ENCODE measurements at regions of chr4 and their contacts with region 1.

Region 1: DNA sequence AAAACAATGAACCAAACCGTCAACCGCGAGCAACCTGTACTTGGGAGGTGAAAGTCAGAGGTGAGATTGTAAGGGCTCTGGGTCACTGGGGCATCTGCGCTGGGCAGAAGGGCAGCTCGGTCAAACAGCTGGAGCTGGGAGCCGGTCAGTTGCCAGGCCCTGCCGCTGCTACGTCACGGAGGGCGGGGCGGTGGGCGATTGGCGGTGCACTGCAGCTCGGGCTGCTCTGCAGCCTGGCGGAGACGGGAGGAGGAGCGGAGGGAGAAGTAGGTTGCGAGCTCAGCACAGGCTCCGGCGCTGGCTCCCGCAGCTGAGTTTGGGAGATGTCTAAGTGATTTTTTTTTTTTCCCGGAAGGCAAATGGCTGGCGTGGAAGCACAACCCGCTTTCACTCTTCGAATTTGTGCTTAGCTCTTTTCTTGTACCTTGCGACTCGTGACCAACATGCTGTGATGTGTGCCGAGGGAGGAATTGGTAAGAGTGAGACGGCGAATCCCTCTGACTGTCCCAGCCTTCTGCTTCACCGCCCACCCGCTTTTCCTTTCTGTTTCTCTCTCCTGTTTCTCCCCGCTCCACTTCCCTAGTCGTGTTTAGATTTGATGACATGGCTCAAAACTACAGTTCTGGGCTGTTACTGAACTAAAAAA is at the start of gene ATP10D:
- DNase-seq: peak; percentile 75
- ATAC-seq: peak; percentile 100
- H3K4me3 ChIP-seq: peak within 1 kb of the TSS; percentile 55 to 74 (median 66)
- H3K27ac ChIP-seq: peak within 1 kb of the TSS; percentile 29
- H3K4me1 ChIP-seq: peaks cover 20% of the 10 kb centered on the region
- H3K27me3 ChIP-seq: peaks cover 0 to 3% of the 10 kb centered on the region in 2 experiments; a peak in 1 of 5 replicates
- CTCF ChIP-seq: peak; percentile 37
- EP300 ChIP-seq: no peak
- POLR2A ChIP-seq: peak; percentile 55 to 89
- RAD21 ChIP-seq: no peak
- total RNA-seq, gene ATP10D: 5.2 and 9.8 TPM in 2 replicates

Region 2: GRCh38 chr4:47442980-47443379 is 42.2 kb before region 1 on chr4:
- CTCF ChIA-PET with region 1: no interaction called
- POLR2A ChIA-PET with region 1: no interaction called
- in situ Hi-C with region 1: no loop called
- intact Hi-C with region 1: loop called (anchors 1 kb)
- DNase-seq: no peak
- ATAC-seq: no peak
- H3K4me3 ChIP-seq: no peak overlapping the region
- H3K27ac ChIP-seq: no peak overlapping the region
- H3K4me1 ChIP-seq: no peaks in the 10 kb centered on the region
- H3K27me3 ChIP-seq: no peaks in the 10 kb centered on the region
- CTCF ChIP-seq: no peak
- EP300 ChIP-seq: no peak
- POLR2A ChIP-seq: no peak
- RAD21 ChIP-seq: no peak

Region 3: GRCh38 chr4:47463235-47463956 is 21.8 kb before region 1 on chr4 and contains the start of gene COMMD8:
- CTCF ChIA-PET with region 1: no interaction called
- POLR2A ChIA-PET with region 1: interaction called, 15 read pairs
- in situ Hi-C with region 1: no loop called
- intact Hi-C with region 1: loop called (anchors 2 kb)
- DNase-seq: peak; percentile 92
- ATAC-seq: peak; percentile 99
- H3K4me3 ChIP-seq: peak within 1 kb of the TSS; percentile 64 to 83 (median 78)
- H3K27ac ChIP-seq: peak within 1 kb of the TSS; percentile 36
- H3K4me1 ChIP-seq: peaks cover 24% of the 10 kb centered on the region
- H3K27me3 ChIP-seq: no peaks in the 10 kb centered on the region; a peak in 1 of 5 replicates
- CTCF ChIP-seq: peak; percentile 52
- EP300 ChIP-seq: no peak
- POLR2A ChIP-seq: peak; percentile 65 to 88
- RAD21 ChIP-seq: no peak; the same call in 1 of the 2 replicates
- total RNA-seq, gene COMMD8: 20.3 and 32.7 TPM in 2 replicates

Region 4: DNA sequence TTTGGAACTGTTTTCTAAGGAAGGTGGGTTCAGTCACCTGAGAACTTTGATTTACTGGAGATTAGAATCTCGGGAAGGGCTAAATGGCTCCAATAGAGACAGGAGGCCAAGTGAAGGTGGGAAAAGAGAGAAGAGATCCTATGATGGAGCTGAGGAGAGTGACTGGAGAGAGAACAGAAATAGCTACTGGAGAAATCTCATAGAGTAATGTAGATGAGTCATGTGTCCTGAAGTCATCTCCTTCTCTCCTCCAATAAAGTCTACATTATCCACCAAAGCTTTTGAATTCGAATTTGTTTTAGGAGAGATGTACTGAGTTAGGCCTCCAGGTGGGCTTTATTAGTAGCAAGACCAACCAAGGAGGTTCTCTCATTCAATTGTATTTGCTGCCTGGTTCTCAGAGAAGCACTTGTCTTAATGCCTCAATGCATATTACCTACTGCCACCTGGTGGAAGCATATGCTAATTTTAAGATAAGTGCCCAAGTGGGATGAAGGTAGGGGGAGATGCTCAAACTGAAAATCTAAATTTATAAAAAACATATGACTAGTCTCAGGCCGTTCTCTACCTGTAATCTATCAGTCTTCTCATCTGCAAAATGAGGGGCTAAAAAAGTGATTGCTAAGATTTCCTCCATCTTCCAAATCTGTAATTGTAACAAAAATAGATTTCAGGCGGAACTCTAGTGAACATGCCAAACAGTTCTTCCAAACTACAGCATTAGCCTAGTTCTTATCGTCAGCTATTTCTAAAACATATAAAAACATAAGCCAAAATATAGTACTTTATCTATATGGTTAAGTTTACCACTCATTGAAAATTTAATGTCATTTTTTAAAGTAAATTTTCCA is 624.5 kb after region 1 on chr4:
- CTCF ChIA-PET with region 1: no interaction called
- POLR2A ChIA-PET with region 1: no interaction called
- in situ Hi-C with region 1: no loop called
- intact Hi-C with region 1: no loop called
- DNase-seq: peak; percentile 62
- ATAC-seq: peak; percentile 85
- H3K4me3 ChIP-seq: no peak overlapping the region
- H3K27ac ChIP-seq: no peak overlapping the region
- H3K4me1 ChIP-seq: no peaks in the 10 kb centered on the region
- H3K27me3 ChIP-seq: no peaks in the 10 kb centered on the region
- CTCF ChIP-seq: peak; percentile 63
- EP300 ChIP-seq: no peak
- POLR2A ChIP-seq: no peak
- RAD21 ChIP-seq: no peak